H1 (cell line): ENCODE measurements at regions of chr16 and their contacts with region 1.

Region 1: GRCh38 chr16:87950765-87951549 is at the start of gene BANP:
- DNase-seq: peak; percentile 93 to 99
- H3K4me3 ChIP-seq: peak within 1 kb of the TSS; percentile 69 to 100 (median 88)
- H3K27ac ChIP-seq: peak within 1 kb of the TSS; percentile 95
- H3K4me1 ChIP-seq: peaks cover 2 to 10% (median 6%) of the 10 kb centered on the region in 4 experiments
- H3K27me3 ChIP-seq: no peaks in the 10 kb centered on the region
- CTCF ChIP-seq: peak; percentile 52 to 68 (median 65)
- EP300 ChIP-seq: no peak
- POLR2A ChIP-seq: peak; percentile 52 to 65
- RAD21 ChIP-seq: 0 out of 4 replicates have a peak, but pooled peaks of 1 of the 2 experiments have one; percentile 19
- total RNA-seq, gene BANP: 39.3 and 39.8 TPM in 2 replicates

Region 2: DNA sequence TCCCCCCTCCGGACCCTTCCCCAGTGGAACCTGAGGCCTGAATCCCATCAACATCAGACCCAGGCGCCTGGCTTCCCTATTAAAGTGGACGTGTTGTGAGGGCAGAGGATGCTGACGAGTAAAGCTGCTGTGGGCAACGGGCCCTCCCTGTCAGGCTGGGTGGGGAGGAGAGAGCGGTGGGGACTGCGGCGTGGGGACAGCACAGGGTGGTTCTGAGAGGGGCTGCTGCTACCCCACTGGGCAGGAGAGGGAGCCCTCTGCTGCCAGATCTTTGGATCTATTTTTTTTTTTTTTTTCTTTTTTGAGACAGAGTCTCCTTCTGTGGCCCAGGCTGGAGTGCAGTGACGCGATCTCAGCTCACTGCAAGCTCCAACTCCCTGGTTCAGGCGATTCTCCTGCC is 20.5 kb before region 1 on chr16:
- CTCF ChIA-PET with region 1: interaction called, 10 read pairs
- POLR2A ChIA-PET with region 1: interaction called, 8 read pairs
- DNase-seq: no peak
- H3K4me3 ChIP-seq: no peak overlapping the region
- H3K27ac ChIP-seq: no peak overlapping the region
- H3K4me1 ChIP-seq: peaks cover 0 to 11% (median under 1%) of the 10 kb centered on the region in 4 experiments; a peak in 3 of 7 replicates
- H3K27me3 ChIP-seq: no peaks in the 10 kb centered on the region
- CTCF ChIP-seq: peak; percentile 36 to 58 (median 45); a peak in 3 of 4 replicates
- EP300 ChIP-seq: no peak
- POLR2A ChIP-seq: no peak
- RAD21 ChIP-seq: peak; percentile 57 to 68

Region 3: GRCh38 chr16:87963400-87963799 is 12.4 kb after region 1 on chr16:
- CTCF ChIA-PET with region 1: interaction called, 6 read pairs
- POLR2A ChIA-PET with region 1: interaction called, 40 read pairs
- DNase-seq: no peak
- H3K4me3 ChIP-seq: no peak overlapping the region
- H3K27ac ChIP-seq: no peak overlapping the region
- H3K4me1 ChIP-seq: peaks cover 0 to 13% (median 2%) of the 10 kb centered on the region in 4 experiments; a peak in 2 of 7 replicates
- H3K27me3 ChIP-seq: no peaks in the 10 kb centered on the region
- CTCF ChIP-seq: no peak
- EP300 ChIP-seq: no peak
- POLR2A ChIP-seq: no peak
- RAD21 ChIP-seq: no peak